Gastrocnemius medialis (tissue), 4 donors: ENCODE measurements at regions of chr7 and their contacts with region 1.

Region 1: GRCh38 chr7:116963234-116963633 is 9.9 kb downstream of the ST7 start:
- DNase-seq: no peak
- ATAC-seq: no peak
- H3K4me3 ChIP-seq: no peak overlapping the region
- H3K27ac ChIP-seq: no peak overlapping the region
- H3K4me1 ChIP-seq: peaks cover 3 to 18% of the 10 kb centered on the region in 2 donors
- H3K27me3 ChIP-seq: no peaks in the 10 kb centered on the region
- CTCF ChIP-seq: no peak
- POLR2A ChIP-seq: no peak

Region 2: DNA sequence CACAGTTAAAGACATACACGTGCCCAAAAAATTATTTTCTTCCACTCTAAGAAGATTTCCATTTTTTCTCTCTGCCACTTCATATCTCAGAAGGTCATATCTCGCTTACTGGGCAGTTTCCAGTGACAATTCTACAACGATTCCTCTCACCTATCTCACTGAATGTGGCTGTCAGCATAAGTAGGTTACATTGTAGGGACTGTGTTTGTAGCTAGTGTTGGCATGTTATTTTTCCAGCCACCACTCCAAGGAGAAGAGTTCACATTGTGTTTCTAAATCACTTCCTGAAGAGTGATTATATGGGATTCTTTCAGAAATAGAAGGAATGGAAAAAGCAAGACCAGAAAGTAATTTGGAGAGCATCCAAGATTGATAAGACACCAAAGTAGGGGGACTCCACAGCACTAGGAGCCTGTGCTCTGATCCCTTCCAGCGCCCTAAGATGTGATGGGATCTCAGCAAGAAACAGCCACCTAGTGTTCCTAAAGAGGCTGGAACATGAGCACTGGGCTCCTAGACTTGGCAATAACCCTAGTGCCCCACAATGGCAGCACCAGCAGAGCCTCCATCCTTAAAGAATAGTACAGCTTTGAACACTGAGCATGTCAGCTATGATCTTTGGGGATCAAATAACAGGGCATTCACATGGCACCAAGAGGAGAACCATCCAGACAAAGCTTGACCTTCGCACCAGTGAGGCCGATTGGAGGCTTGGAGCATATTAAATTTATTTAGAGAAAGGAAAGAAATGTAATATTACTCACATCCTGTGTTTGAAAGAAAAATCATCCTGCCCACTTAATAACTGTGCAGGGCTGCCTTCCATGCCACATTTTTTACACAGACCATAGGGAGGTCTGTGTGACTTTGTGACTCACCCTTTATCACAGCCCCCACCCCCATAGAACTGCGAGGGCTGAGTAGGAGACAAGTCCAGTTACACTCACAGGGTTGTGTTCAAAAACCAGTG is 386.6 kb before region 1 on chr7:
- in situ Hi-C with region 1: no loop called
- intact Hi-C with region 1: no loop called
- DNase-seq: no peak
- ATAC-seq: peak in 1 of 2 donors; percentile 32
- H3K4me3 ChIP-seq: no peak overlapping the region
- H3K27ac ChIP-seq: peak overlapping the region; percentile 2 to 64 (median 42)
- H3K4me1 ChIP-seq: peaks cover 13 to 17% of the 10 kb centered on the region in 2 donors
- H3K27me3 ChIP-seq: no peaks in the 10 kb centered on the region
- CTCF ChIP-seq: no peak
- POLR2A ChIP-seq: no peak

Region 3: GRCh38 chr7:116924741-116925140 is 38.5 kb before region 1 on chr7:
- in situ Hi-C with region 1: loop called in 1 of 4 experiments (anchors 5 kb)
- intact Hi-C with region 1: no loop called
- DNase-seq: no peak
- ATAC-seq: no peak
- H3K4me3 ChIP-seq: no peak overlapping the region
- H3K27ac ChIP-seq: no peak overlapping the region
- H3K4me1 ChIP-seq: no peaks in the 10 kb centered on the region
- H3K27me3 ChIP-seq: no peaks in the 10 kb centered on the region
- CTCF ChIP-seq: no peak
- POLR2A ChIP-seq: no peak

Region 4: GRCh38 chr7:116990056-116990455 is 26.8 kb after region 1 on chr7:
- in situ Hi-C with region 1: no loop called
- intact Hi-C with region 1: no loop called
- DNase-seq: no peak
- ATAC-seq: no peak
- H3K4me3 ChIP-seq: no peak overlapping the region
- H3K27ac ChIP-seq: no peak overlapping the region
- H3K4me1 ChIP-seq: peaks cover 3 to 6% of the 10 kb centered on the region in 2 donors
- H3K27me3 ChIP-seq: no peaks in the 10 kb centered on the region
- CTCF ChIP-seq: no peak
- POLR2A ChIP-seq: no peak